Left cardiac atrium (tissue), 4 donors: ENCODE measurements at regions of chr11 and their contacts with region 1.

Region 1: GRCh38 chr11:114159802-114160632 is 100.5 kb downstream of the ZBTB16 start:
- DNase-seq: peak; percentile 99
- ATAC-seq: peak; percentile 79 to 84

Region 2: GRCh38 chr11:114073828-114074381 is 86.1 kb before region 1 on chr11:
- intact Hi-C with region 1: loop called in 1 of 2 experiments (anchors 5 kb)
- DNase-seq: no peak
- ATAC-seq: no peak